HepG2 (cell line): ENCODE measurements at regions of chr20 and their contacts with region 1.

Region 1: GRCh38 chr20:18566892-18567742 is at the start of gene SMIM26:
- DNase-seq: peak; percentile 96
- ATAC-seq: peak; percentile 99
- H3K4me3 ChIP-seq: peak within 1 kb of the TSS; percentile 69 to 97 (median 89)
- H3K27ac ChIP-seq: peak within 1 kb of the TSS; percentile 83
- H3K4me1 ChIP-seq: peaks cover 14% of the 10 kb centered on the region
- H3K27me3 ChIP-seq: no peaks in the 10 kb centered on the region; a peak in 1 of 5 replicates
- CTCF ChIP-seq: 0 out of 2 replicates have a peak, but pooled peaks have one; percentile 19
- EP300 ChIP-seq: peak in 1 of 2 experiments; percentile 54; a peak in 2 of 4 replicates
- POLR2A ChIP-seq: peak; percentile 94 to 99
- RAD21 ChIP-seq: peak; percentile 58; the same call in 1 of the 2 replicates
- total RNA-seq, gene SMIM26: 185 and 214 TPM in 2 replicates

Region 2: DNA sequence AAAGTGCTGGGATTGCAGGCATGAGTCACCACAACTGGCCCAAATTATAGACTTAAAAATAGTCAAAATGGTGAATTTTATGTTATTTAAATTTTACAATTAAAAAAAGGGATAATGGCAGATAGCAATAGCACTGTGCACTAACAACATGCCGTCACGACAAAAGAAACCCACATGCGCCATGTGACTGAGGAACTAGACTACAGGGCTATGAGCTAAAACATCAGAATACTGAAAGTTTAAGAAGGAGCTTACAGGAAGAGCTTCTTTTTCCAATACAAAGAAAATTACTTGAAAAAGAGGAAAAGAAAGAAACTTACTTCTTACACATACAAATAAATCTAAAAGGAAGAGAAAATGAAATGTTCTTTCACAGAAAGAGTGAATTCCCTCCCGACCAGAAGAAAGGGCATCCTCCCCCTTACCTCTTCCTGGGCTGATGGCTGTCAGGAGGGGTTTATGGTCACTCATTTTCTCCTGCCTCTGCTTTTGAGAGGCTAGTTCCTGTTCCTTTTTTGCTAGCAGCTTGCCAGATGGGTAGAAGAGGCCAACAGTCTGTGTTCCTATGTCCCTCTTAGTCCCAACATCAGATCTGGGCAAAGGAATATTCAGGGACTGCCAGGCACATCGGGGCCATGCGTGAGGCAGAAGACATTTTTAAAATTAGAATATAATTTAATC is 154.8 kb before region 1 on chr20:
- CTCF ChIA-PET with region 1: no interaction called
- POLR2A ChIA-PET with region 1: no interaction called
- in situ Hi-C with region 1: no loop called
- intact Hi-C with region 1: loop called (anchors 5 kb)
- DNase-seq: no peak
- ATAC-seq: no peak
- H3K4me3 ChIP-seq: no peak overlapping the region
- H3K27ac ChIP-seq: no peak overlapping the region
- H3K4me1 ChIP-seq: peaks cover 13% of the 10 kb centered on the region
- H3K27me3 ChIP-seq: no peaks in the 10 kb centered on the region
- CTCF ChIP-seq: no peak
- EP300 ChIP-seq: no peak
- POLR2A ChIP-seq: no peak
- RAD21 ChIP-seq: no peak

Region 3: GRCh38 chr20:18496740-18497592 is 70.2 kb before region 1 on chr20 and contains the start of gene RBBP9:
- CTCF ChIA-PET with region 1: no interaction called
- POLR2A ChIA-PET with region 1: interaction called, 10 read pairs
- in situ Hi-C with region 1: no loop called
- intact Hi-C with region 1: no loop called
- DNase-seq: peak; percentile 84
- ATAC-seq: peak; percentile 100
- H3K4me3 ChIP-seq: peak within 1 kb of the TSS; percentile 91 to 99 (median 92)
- H3K27ac ChIP-seq: peak within 1 kb of the TSS; percentile 73
- H3K4me1 ChIP-seq: peaks cover 32% of the 10 kb centered on the region
- H3K27me3 ChIP-seq: no peaks in the 10 kb centered on the region; a peak in 1 of 5 replicates
- CTCF ChIP-seq: peak; percentile 29; the same call in 1 of the 2 replicates
- EP300 ChIP-seq: peak; percentile 31 to 35; a peak in 1 of 4 replicates
- POLR2A ChIP-seq: peak; percentile 92 to 97
- RAD21 ChIP-seq: peak; percentile 51; the same call in 1 of the 2 replicates
- total RNA-seq, gene RBBP9: 56.3 and 99.5 TPM in 2 replicates

Region 4: GRCh38 chr20:18587665-18588573 is 20.8 kb after region 1 on chr20 and contains the start of gene DTD1:
- CTCF ChIA-PET with region 1: no interaction called
- POLR2A ChIA-PET with region 1: interaction called, 25 read pairs
- in situ Hi-C with region 1: no loop called
- intact Hi-C with region 1: loop called (anchors 1 kb)
- DNase-seq: peak; percentile 84
- ATAC-seq: peak; percentile 90
- H3K4me3 ChIP-seq: peak within 1 kb of the TSS; percentile 67 to 80 (median 80)
- H3K27ac ChIP-seq: peak within 1 kb of the TSS; percentile 36
- H3K4me1 ChIP-seq: peaks cover 50% of the 10 kb centered on the region
- H3K27me3 ChIP-seq: no peaks in the 10 kb centered on the region
- CTCF ChIP-seq: peak; percentile 88
- EP300 ChIP-seq: no peak
- POLR2A ChIP-seq: peak; percentile 62 to 76
- RAD21 ChIP-seq: peak; percentile 88
- total RNA-seq, gene DTD1: 79.3 and 85.5 TPM in 2 replicates

Region 5: GRCh38 chr20:20083807-20084206 is 1516.7 kb after region 1 on chr20:
- CTCF ChIA-PET with region 1: no interaction called
- POLR2A ChIA-PET with region 1: no interaction called
- in situ Hi-C with region 1: no loop called
- intact Hi-C with region 1: no loop called
- DNase-seq: peak; percentile 52
- ATAC-seq: peak; percentile 84
- H3K4me3 ChIP-seq: no peak overlapping the region; a peak in 1 of 6 replicates
- H3K27ac ChIP-seq: no peak overlapping the region
- H3K4me1 ChIP-seq: 0 out of 2 replicates have a peak, but pooled peaks cover 12% of the 10 kb centered on the region
- H3K27me3 ChIP-seq: peaks cover 0 to 17% of the 10 kb centered on the region in 2 experiments; a peak in 2 of 5 replicates
- CTCF ChIP-seq: peak; percentile 73
- EP300 ChIP-seq: no peak
- POLR2A ChIP-seq: no peak
- RAD21 ChIP-seq: peak; percentile 21; the same call in 1 of the 2 replicates